ENCODE measurements at regions of chr22 and their contacts with region 1.

Region 1: DNA sequence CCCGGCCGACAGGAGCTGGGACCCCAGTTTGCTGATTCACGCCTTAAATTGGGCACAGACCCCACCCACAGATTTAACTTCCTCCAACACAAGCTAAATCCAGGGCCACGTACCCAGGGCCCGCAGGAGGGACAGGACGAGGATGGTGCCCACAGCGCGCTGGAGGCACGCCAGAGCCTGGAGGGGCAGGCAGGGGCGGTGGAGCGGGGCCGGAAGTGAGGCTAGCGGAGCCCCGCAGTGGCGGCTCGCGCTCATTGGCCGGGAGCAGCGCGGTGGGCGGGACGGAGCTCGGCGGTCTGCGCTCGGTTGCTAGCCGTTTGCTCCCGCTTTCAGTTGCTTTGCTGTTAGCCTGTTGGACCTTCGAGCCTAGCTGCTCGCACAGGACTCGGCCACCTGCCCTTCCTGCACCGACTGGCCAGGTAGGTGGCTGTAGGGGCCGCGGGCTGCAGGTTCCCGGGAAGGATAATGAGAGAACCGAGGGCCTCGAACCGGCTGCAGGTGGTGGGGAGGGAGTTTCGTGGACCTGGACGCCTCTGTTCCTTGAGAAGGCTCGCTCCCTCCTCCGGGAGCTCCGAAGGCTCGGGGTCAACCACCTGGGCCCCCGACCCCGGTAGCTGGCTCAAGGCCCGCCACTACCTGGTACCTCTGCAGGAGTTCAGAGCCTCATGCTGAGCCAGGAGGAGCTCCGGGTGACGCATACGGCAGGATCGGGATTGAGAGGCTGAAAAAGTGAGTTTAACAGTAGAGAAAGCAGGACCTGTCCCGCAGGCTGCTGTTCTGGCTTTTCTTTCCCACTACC is at the start of gene CCDC134:
- DNase-seq: peak; percentile 58 to 91
- H3K4me3 ChIP-seq: peak within 1 kb of the TSS; percentile 77 to 90
- H3K27ac ChIP-seq: peak within 1 kb of the TSS; percentile 77 to 83
- H3K4me1 ChIP-seq: peaks cover 0 to 20% of the 10 kb centered on the region in 2 donors
- H3K27me3 ChIP-seq: no peaks in the 10 kb centered on the region
- CTCF ChIP-seq: no peak
- total RNA-seq, gene CCDC134: 6.4 TPM

Region 2: DNA sequence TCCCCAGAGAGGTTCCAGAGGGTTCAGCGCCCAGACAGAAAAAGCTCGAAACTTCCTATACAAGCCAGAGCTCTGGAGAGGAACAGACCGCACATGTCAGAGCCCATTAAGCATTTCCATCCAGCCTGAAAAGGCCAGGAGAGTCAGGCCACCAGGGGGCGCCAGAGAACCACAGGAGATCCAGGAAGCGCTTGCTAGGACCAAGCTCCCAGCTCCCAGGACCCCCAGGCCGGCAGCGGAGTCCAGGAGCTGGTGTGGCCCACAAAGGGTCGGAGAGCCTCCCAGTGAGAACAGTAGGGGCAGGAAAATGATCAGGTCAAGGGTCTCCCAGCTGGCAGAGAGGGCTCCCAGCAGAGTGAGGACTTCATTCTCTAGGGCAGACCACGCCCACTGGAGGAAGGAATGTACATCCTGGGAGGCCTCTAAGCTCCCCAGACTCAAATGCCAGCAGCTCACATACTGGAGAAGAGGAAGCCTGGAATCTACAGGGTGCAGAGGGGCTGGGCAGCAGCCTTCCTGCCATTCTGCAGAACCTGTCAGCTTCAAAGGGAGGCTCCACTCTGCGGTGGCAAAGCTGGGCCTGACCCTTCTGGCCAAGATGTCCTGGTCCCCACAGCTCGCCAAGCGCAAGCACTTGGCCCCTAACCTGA is 103.3 kb before region 1 on chr22:
- intact Hi-C with region 1: loop called (anchors 1 kb)
- DNase-seq: peak; percentile 49 to 95
- H3K4me3 ChIP-seq: peak overlapping the region in 1 of 2 donors; percentile 36
- H3K27ac ChIP-seq: peak overlapping the region in 1 of 2 donors; percentile 65
- H3K4me1 ChIP-seq: peaks cover 0 to 8% of the 10 kb centered on the region in 2 donors
- H3K27me3 ChIP-seq: no peaks in the 10 kb centered on the region
- CTCF ChIP-seq: peak; percentile 89 to 98 (median 95)

Region 3: DNA sequence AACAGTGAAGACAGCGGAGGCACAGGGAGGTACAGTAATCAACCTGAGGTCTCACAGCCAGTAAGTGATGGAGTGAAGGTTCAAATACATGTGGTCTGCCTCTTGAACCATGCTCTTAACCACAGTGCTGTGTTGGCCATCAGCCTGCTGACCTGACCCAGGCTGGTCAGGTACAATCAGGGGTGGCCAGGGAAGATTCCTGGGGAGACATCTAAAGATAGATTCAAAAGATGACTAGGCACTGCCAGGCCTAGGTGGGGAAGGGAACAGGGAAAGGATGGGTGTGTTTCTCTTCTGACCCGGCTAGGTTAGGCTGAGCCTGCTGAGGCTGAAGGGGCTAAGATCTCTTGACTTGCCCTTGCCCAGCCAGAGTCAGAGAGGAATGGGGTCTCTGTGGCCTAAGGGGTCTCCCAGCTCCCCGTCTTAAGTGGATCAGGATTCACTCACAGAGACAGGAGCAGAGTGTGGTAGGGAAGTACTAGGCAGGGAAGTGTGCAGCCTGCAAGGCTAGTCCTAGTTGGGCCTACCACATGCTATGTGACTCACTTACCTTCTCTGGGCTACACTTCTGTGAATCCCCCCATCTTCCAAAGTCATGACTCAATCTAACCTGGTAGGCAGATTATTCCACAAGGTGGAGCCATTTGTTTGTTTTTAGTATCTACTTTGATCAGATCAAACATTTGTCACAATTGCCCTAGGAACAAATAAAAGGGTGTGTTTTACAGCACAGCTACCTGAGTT is 21.9 kb after region 1 on chr22:
- intact Hi-C with region 1: no loop called
- DNase-seq: no peak
- H3K4me3 ChIP-seq: no peak overlapping the region
- H3K27ac ChIP-seq: no peak overlapping the region
- H3K4me1 ChIP-seq: no peaks in the 10 kb centered on the region
- H3K27me3 ChIP-seq: no peaks in the 10 kb centered on the region
- CTCF ChIP-seq: peak in 2 of 3 experiments; percentile 40 to 45

Region 4: DNA sequence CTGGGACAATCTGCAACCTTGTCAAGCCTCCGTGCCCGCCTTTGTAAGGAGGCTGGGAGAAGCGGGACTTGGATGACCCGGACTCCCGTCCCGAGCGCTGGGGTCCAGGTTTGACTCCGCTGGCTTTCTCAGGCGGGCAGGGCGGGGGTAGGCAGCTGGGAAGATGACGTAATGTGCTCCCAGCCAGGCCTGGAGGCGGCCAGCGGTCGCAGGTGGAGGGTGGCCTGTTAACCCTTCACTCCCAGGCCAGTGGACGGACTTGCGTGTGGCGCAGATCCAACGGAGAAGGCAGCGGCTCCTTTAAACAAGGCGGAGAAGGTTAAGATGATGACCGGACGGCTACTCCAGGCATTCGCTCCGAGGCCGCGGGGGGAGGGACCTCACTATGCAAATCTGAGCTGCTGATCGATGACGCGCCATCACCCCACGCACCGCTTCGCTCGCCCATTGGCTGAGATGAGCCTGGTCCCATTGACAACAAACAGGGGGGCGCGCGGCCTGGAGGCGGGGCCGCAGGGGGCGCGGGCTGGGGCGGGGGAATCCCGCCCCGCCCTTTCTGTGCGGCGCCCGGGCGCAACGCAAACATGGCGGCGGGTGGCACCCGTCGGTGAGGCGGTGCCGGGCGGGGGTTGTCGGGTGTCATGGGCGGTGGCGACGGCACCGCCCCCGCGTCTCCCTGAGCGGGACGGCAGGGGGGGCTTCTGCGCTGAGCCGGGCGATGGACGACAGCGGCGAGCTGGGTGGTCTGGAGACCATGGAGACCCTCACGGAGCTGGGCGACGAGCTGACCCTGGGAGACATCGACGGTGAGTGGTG is 32.2 kb after region 1 on chr22 and contains the start of gene SREBF2:
- intact Hi-C with region 1: loop called (anchors 1 kb)
- DNase-seq: peak; percentile 99 to 100
- H3K4me3 ChIP-seq: peak within 1 kb of the TSS; percentile 90 to 97
- H3K27ac ChIP-seq: peak within 1 kb of the TSS; percentile 92
- H3K4me1 ChIP-seq: peaks cover 0 to 5% of the 10 kb centered on the region in 2 donors
- H3K27me3 ChIP-seq: no peaks in the 10 kb centered on the region
- CTCF ChIP-seq: peak in 1 of 3 experiments; percentile 8
- total RNA-seq, gene SREBF2: 46.1 TPM

Region 5: GRCh38 chr22:41873391-41873790 is 72.8 kb after region 1 on chr22:
- intact Hi-C with region 1: no loop called
- DNase-seq: no peak
- H3K4me3 ChIP-seq: no peak overlapping the region
- H3K27ac ChIP-seq: no peak overlapping the region
- H3K4me1 ChIP-seq: no peaks in the 10 kb centered on the region
- H3K27me3 ChIP-seq: no peaks in the 10 kb centered on the region
- CTCF ChIP-seq: no peak

Measured in ascending aorta (tissue), 2 donors.